ENCODE measurements at regions of chr1 and their contacts with region 1.

Region 1: DNA sequence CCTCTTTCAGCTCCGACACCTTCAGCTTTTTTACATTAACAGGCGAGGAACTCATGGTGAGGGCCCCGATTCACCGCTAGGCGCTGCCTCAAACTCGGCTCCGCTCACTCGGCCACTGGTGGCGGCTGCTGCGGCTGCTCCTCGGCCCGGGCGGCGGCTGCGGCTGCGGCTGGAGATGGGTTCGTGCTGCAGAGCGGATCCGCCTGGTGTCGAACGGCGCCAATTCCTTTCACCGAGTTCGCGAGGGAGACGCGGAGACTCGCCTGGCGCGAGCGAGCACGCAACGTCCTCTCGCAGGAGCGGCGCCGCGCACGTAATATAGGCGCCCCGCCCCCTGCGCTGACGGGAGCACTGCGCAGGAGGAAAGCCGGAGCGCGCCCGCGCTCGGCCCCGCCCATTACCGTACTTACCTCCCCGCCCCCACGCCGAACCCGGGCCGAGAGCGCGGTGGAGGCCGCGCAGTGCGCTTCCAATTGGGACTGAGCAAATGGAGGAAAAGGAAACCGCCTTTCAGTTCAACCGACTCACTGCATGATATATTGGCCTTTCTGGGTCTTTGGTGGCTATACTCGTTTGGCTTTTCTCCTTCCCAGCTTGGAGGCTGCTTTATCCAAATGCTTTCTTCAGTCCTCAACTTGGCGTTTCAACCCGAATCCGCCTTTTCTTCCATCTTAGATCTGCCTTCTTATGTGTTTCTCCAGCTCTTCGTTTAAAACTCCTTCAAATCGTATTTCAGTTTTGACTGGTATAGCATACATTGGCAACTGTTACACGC is at the start of gene HNRNPU:
- DNase-seq: peak; percentile 98
- ATAC-seq: peak; percentile 66
- H3K4me3 Mint-ChIP-seq: peak within 1 kb of the TSS; percentile 93
- H3K27ac Mint-ChIP-seq: peak within 1 kb of the TSS; percentile 96
- H3K4me1 Mint-ChIP-seq: peaks cover 29% of the 10 kb centered on the region
- H3K27me3 Mint-ChIP-seq: no peaks in the 10 kb centered on the region
- total RNA-seq, gene HNRNPU: 388 to 398 TPM

Region 2: DNA sequence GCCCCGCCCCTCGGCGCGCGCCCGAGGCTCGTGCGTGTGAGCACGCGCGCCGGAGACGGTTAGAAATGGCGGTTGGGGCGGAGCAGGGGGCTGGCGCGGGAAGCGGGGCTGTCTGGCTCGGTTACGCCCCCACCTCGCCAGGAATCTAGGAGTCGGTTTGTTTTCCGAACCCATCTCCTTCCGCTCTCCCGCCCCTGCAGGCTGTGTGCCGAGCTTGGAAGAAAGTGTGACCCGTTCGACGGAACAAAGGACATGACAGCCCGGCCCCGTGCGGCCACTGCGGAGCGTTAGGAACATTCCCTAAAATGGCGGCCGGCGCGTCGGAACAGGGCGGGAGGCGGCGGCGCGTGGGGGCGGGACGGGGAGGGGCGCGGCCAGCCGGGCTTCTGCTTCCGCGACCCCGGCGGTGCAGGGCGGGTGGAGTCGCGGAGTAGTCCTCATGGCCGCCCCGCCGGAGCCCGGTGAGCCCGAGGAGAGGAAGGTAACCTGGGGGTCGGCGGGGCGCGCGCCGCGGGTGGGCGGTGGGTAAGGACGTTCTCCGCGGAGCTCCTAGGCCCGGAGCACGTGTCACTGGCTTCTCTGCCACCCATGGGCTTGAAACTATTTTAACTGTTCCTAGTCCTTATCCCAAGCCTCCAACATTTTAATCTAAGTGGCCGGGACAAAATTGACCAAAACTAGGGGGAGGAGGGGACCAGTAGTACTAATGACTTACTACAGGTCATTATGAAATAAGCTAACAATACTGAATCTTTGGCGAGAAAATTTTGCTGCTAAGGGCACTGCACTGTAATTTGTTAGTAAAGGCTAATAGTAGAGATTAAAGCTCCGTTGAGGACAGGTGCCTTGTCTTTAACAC is 28.9 kb before region 1 on chr1 and contains the start of gene COX20:
- POLR2A ChIA-PET with region 1: interaction called, 391 read pairs
- DNase-seq: no peak
- ATAC-seq: peak; percentile 67
- H3K4me3 Mint-ChIP-seq: peak within 1 kb of the TSS; percentile 94
- H3K27ac Mint-ChIP-seq: peak within 1 kb of the TSS; percentile 98
- H3K4me1 Mint-ChIP-seq: peaks cover 34% of the 10 kb centered on the region
- H3K27me3 Mint-ChIP-seq: no peaks in the 10 kb centered on the region
- total RNA-seq, gene COX20: 25.1 to 25.9 TPM

Region 3: GRCh38 chr1:244964112-244964971 is 99.9 kb after region 1 on chr1:
- POLR2A ChIA-PET with region 1: interaction called, 101 read pairs
- DNase-seq: no peak
- ATAC-seq: no peak
- H3K4me3 Mint-ChIP-seq: peak overlapping the region; percentile 2
- H3K27ac Mint-ChIP-seq: peak overlapping the region; percentile 13
- H3K4me1 Mint-ChIP-seq: peaks cover 20% of the 10 kb centered on the region
- H3K27me3 Mint-ChIP-seq: peaks cover 7% of the 10 kb centered on the region

Region 4: GRCh38 chr1:244970661-244971551 is 106.5 kb after region 1 on chr1:
- POLR2A ChIA-PET with region 1: interaction called, 101 read pairs
- DNase-seq: peak; percentile 93
- ATAC-seq: peak; percentile 81
- H3K4me3 Mint-ChIP-seq: peak overlapping the region; percentile 89
- H3K27ac Mint-ChIP-seq: peak overlapping the region; percentile 98
- H3K4me1 Mint-ChIP-seq: peaks cover 19% of the 10 kb centered on the region
- H3K27me3 Mint-ChIP-seq: peaks cover 4% of the 10 kb centered on the region

Measured in activated naive CD8-positive, alpha-beta T cell treated with anti-CD3 and anti-CD28 coated beads, Interleukin-2, amount 10 ng/mL, durations not matched to agents 7 days and 5 days (primary cell).